ENCODE measurements at regions of chr4 and their contacts with region 1.

Region 1: DNA sequence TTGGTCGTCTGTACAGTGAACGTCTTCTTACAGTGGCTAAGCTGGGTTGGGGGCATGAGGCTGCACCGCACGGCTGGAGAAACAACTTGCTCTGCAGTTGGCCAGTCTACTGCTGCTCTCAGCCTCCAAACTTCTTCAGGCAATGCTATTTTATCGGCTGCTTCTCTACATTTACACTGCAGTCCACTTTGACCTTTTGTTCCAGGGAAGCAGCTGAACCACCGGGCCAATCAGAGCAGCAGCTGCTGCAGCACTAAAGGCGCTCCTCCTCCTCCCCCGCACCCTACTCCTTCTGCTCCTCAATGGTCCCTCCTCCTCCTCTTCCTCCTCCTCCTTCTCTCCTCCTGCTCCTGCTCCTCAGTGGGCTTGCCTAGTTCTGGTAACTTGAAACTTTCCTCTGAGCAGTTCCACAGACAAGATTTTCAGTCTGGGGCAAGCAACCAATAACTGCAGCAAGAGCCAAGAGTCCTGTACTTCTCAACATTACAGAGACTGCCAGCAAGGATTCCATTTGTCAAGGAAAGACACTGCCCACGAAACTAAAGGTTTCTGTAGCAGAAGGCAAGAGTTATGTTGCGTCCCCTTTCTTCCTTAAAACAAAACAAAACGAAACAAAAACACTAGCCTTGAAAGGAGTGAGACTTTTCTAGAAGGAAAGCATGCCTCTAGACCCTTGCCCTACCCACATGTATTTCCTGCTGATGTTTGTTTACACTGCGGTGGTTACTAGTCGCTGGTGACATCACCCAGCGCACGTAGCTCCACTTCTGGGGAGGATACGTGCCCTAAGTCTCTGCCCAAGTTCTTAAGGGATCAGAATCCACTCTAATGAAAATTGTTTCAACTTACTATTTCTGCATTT is 125.7 kb upstream of the NAP1L5 start:
- DNase-seq: peak; percentile 78
- H3K4me3 Mint-ChIP-seq: peak overlapping the region; percentile 93
- H3K27ac Mint-ChIP-seq: peak overlapping the region; percentile 90
- H3K4me1 Mint-ChIP-seq: peaks cover 25% of the 10 kb centered on the region
- H3K27me3 Mint-ChIP-seq: no peaks in the 10 kb centered on the region

Region 2: DNA sequence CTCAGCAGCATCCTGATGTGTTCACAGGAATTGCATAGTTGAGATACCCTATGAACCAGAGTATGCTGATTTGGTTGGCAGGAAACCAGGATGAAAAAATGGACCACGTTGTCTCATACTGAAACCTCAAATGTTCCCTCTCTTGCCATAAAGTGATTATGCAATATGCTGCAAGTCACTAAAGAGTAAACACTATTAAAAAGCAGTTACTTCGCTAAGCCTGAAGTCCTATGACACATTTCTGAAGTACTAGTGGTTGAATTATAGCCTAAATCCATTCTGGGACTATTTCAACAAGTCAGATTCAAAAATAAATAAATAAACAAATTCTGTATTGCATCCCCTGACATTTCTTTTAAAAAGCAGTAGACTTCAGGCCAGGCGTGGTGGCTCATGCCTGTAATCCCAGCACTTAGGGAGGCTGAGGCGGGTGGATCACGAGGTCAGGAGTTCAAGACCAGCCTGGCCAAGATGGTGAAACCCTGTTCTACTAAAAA is 19.6 kb before region 1 on chr4:
- CTCF ChIA-PET with region 1: interaction called, 3 read pairs
- intact Hi-C with region 1: loop called (anchors 1 kb)
- DNase-seq: peak; percentile 60
- H3K4me3 Mint-ChIP-seq: no peak overlapping the region
- H3K27ac Mint-ChIP-seq: no peak overlapping the region
- H3K4me1 Mint-ChIP-seq: peaks cover 22% of the 10 kb centered on the region
- H3K27me3 Mint-ChIP-seq: no peaks in the 10 kb centered on the region

Region 3: DNA sequence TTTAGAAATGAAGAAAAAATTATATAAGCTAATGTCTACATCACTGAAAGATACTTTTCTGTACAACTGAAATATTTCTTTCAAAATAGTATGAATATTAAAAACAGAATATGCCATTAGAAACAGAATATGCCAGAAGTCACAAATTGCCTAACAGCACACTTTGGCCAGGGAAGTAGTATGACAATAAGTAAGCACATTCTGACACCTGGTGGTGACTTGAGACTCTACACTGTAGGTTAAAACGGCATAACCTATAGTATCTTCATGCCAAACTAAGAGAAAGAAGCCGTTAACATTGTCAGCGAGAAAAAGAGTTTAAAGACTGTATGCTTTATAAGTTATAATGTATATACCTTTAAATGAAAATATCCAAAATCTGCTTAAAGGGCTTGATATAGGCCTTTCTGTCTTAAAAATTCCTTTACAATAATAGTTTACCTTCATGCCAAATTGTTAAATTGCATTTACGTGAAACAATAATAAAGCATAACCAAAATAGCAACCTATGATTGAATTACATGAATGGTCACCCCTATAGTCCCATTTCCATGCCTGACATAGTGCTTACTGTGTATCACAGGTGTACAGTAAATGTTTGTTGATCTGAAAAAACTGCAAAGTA is 200.9 kb after region 1 on chr4:
- CTCF ChIA-PET with region 1: interaction called, 161 read pairs
- intact Hi-C with region 1: loop called (anchors 1 kb)
- DNase-seq: peak; percentile 71
- H3K4me3 Mint-ChIP-seq: no peak overlapping the region
- H3K27ac Mint-ChIP-seq: no peak overlapping the region
- H3K4me1 Mint-ChIP-seq: peaks cover 4% of the 10 kb centered on the region
- H3K27me3 Mint-ChIP-seq: no peaks in the 10 kb centered on the region

Region 4: GRCh38 chr4:89110986-89111832 is 287.9 kb after region 1 on chr4 and contains the start of gene TIGD2:
- CTCF ChIA-PET with region 1: no interaction called
- intact Hi-C with region 1: loop called (anchors 1 kb)
- DNase-seq: peak; percentile 81
- H3K4me3 Mint-ChIP-seq: peak within 1 kb of the TSS; percentile 76
- H3K27ac Mint-ChIP-seq: no peak within 1 kb of the TSS
- H3K4me1 Mint-ChIP-seq: peaks cover 11% of the 10 kb centered on the region
- H3K27me3 Mint-ChIP-seq: peaks cover 18% of the 10 kb centered on the region
- total RNA-seq, gene TIGD2: 1.1 to 1.3 TPM

Region 5: GRCh38 chr4:89226665-89227574 is 403.6 kb after region 1 on chr4:
- CTCF ChIA-PET with region 1: no interaction called
- intact Hi-C with region 1: loop called (anchors 1 kb)
- DNase-seq: peak; percentile 90
- H3K4me3 Mint-ChIP-seq: peak overlapping the region; percentile 58
- H3K27ac Mint-ChIP-seq: no peak overlapping the region
- H3K4me1 Mint-ChIP-seq: peaks cover 11% of the 10 kb centered on the region
- H3K27me3 Mint-ChIP-seq: no peaks in the 10 kb centered on the region

Region 6: DNA sequence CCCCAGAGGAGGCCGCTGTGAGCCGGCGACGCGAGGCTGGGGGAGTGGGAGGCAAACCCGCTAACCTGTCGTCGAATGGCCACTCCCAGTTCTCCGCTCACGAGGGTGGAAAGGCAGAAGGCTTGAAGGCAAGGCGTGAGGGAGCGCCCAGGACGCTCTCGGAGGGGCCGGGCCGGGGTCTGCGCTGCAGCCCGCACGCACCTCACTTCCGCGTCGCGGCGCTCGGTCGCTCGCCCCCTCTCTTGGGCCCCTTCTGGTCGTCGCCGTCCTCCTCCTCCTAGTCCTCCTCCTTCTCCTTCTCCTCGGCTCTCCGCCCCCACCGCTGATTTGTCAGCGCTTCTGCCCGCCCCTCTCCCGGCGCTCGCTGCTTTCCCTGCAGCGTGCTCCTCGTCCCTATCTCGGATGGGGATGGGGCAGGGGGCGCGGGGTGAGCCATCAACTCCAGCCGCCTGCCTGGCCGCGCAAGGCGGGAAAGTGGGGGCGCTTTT is 1013.7 kb after region 1 on chr4 and contains the start of gene SNCA:
- CTCF ChIA-PET with region 1: no interaction called
- intact Hi-C with region 1: loop called (anchors 2 kb)
- DNase-seq: peak; percentile 63
- H3K4me3 Mint-ChIP-seq: peak within 1 kb of the TSS; percentile 78
- H3K27ac Mint-ChIP-seq: no peak within 1 kb of the TSS
- H3K4me1 Mint-ChIP-seq: peaks cover 17% of the 10 kb centered on the region
- H3K27me3 Mint-ChIP-seq: peaks cover 52% of the 10 kb centered on the region
- total RNA-seq, gene SNCA: 1.0 to 1.1 TPM